AG04450 (cell line): ENCODE measurements at regions of chr7 and their contacts with region 1.

Region 1: GRCh38 chr7:5363729-5364128 is 59.9 kb downstream of the TNRC18 start:
- DNase-seq: no peak
- H3K4me3 ChIP-seq: no peak overlapping the region
- H3K27ac ChIP-seq: no peak overlapping the region
- H3K27me3 ChIP-seq: no peaks in the 10 kb centered on the region
- CTCF ChIP-seq: no peak

Region 2: GRCh38 chr7:4675771-4676367 is 687.9 kb before region 1 on chr7:
- CTCF ChIA-PET with region 1: no interaction called
- POLR2A ChIA-PET with region 1: no interaction called
- DNase-seq: no peak
- H3K4me3 ChIP-seq: no peak overlapping the region
- H3K27ac ChIP-seq: no peak overlapping the region
- H3K27me3 ChIP-seq: no peaks in the 10 kb centered on the region
- CTCF ChIP-seq: no peak

Region 3: GRCh38 chr7:5375925-5376324 is 12.2 kb after region 1 on chr7:
- CTCF ChIA-PET with region 1: interaction called, 12 read pairs
- POLR2A ChIA-PET with region 1: interaction called, 3 read pairs
- DNase-seq: no peak
- H3K4me3 ChIP-seq: no peak overlapping the region
- H3K27ac ChIP-seq: no peak overlapping the region
- H3K27me3 ChIP-seq: no peaks in the 10 kb centered on the region
- CTCF ChIP-seq: no peak

Region 4: GRCh38 chr7:5408777-5409176 is 45.0 kb after region 1 on chr7:
- CTCF ChIA-PET with region 1: interaction called, 10 read pairs
- POLR2A ChIA-PET with region 1: no interaction called
- DNase-seq: no peak
- H3K4me3 ChIP-seq: no peak overlapping the region
- H3K27ac ChIP-seq: no peak overlapping the region
- H3K27me3 ChIP-seq: no peaks in the 10 kb centered on the region
- CTCF ChIP-seq: no peak

Region 5: DNA sequence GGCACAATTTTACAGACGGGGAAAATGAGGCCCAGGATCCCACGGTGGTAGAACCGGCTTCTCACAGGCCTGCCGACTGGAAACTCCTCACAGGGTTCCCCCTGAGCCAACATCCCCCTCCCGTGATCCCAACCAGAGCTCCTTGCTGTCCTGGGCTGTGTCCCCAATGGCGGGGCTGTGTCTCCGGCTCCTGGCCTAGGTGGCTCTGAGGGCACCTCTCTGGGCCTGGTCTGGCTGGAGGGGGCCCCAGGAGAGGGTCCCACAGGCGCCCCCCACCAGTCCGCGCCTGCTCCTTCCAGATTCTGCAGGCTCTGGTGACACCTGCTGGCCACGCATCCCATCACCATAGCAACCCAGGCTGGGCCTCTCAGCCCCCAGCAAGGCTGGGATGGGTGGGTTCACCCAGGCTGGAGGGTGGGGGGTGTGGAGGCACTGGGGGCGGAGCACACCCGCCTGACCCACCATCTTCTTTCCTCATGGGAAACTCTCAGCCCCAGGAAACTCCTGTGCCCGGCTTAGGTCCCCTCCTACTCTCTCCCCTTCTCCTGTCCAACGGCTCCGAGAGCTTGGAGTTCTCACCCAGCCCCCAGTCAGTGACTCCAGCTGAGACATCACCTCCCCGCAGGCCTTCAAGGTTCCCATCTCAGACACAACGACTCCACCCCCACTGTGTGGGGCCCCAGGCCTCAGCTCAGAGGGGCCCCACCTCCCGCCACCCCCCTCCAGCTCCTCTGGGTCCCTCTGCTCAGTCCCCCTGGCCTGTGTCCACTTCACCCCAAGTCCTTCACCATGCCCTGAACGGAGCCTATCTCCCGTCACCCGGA is 87.0 kb after region 1 on chr7:
- CTCF ChIA-PET with region 1: interaction called, 18 read pairs
- POLR2A ChIA-PET with region 1: interaction called, 3 read pairs
- DNase-seq: no peak
- H3K4me3 ChIP-seq: no peak overlapping the region
- H3K27ac ChIP-seq: no peak overlapping the region
- H3K27me3 ChIP-seq: no peaks in the 10 kb centered on the region
- CTCF ChIP-seq: peak; percentile 57